ENCODE measurements at regions of chr6 and their contacts with region 1.

Region 1: GRCh38 chr6:153150752-153151440 is 19.8 kb upstream of the RGS17 start:
- DNase-seq: no peak
- ATAC-seq: no peak
- H3K4me3 Mint-ChIP-seq: no peak overlapping the region
- H3K27ac Mint-ChIP-seq: no peak overlapping the region
- H3K4me1 Mint-ChIP-seq: no peaks in the 10 kb centered on the region
- H3K27me3 Mint-ChIP-seq: peaks cover 3% of the 10 kb centered on the region

Region 2: DNA sequence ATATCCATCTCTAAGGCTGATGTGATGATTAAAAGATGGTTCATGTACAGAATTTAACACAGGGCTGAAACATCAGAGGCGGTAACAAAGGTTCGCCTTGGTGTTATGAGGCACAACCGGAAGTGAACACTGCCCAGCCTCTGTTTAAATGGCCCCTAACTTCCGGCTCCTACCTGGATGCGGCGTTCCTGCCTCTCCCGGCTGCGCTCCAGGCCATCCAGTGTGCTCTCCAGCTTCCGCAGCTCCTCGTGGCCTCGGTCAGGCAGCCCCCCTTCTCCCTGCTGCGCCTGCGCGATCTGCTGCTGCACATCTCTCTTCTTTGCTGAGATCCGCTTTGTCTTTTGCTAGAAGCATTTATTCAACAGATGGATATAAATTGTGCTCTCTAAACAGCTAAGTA is 709.0 kb before region 1 on chr6:
- CTCF ChIA-PET with region 1: no interaction called
- POLR2A ChIA-PET with region 1: no interaction called
- intact Hi-C with region 1: no loop called
- DNase-seq: no peak
- ATAC-seq: no peak
- H3K4me3 Mint-ChIP-seq: no peak overlapping the region
- H3K27ac Mint-ChIP-seq: no peak overlapping the region
- H3K4me1 Mint-ChIP-seq: no peaks in the 10 kb centered on the region
- H3K27me3 Mint-ChIP-seq: peaks cover 4% of the 10 kb centered on the region

Region 3: DNA sequence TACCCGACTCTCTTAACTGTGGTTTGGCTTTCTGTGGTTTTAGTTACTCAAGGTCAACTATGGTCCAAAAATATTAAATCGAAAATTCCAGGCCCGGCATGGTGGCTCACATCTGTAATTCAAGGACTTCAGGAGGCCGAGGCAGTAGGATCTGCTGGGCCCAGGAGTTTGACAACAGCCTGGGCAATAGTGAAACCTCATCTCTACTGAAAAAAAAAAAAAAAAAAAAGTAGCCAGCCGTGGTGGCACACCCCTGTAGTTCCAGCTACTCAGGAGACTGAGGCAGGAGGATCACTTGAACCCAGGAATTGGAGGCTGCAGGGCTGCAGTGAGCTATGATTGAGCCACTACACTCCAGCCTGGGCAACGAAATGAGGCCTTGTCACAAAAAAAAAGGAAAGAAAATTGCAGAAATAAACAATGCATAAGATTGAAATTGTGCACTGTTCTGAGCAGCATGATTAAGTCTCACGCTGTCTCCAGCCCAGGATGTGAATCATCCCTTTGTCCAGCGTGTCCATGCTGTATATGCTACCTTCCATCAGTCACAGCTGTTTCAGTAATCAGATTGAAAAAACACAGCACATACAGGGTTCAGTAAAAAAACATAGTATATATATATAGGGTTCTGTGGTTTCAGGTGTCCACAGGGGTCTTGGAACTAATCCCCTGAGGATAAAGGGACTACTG is 60.5 kb before region 1 on chr6:
- CTCF ChIA-PET with region 1: no interaction called
- POLR2A ChIA-PET with region 1: no interaction called
- intact Hi-C with region 1: no loop called
- DNase-seq: no peak
- ATAC-seq: no peak
- H3K4me3 Mint-ChIP-seq: no peak overlapping the region
- H3K27ac Mint-ChIP-seq: no peak overlapping the region
- H3K4me1 Mint-ChIP-seq: peaks cover 7% of the 10 kb centered on the region
- H3K27me3 Mint-ChIP-seq: peaks cover 9% of the 10 kb centered on the region

Region 4: DNA sequence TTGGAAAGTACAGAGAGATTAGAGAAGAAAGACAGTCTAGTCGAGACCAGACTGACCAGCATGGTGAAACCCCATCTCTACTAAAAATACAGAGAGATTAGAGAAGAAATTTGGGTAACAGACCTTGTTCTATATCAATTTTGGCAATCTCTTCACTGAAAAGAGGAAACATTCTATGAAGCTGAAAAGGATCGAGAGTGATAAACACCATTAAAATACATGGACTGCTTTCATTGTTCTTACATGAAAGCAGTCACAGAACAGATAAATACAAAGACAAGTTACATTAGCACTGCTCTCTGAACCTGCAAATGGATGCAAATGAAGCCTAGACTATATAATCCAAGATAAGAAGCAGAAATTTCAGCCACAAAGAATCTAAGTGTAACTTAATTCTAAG is 879.8 kb after region 1 on chr6:
- CTCF ChIA-PET with region 1: no interaction called
- POLR2A ChIA-PET with region 1: no interaction called
- intact Hi-C with region 1: loop called in 1 of 2 experiments (anchors 10 kb)
- DNase-seq: no peak
- ATAC-seq: no peak
- H3K4me3 Mint-ChIP-seq: no peak overlapping the region
- H3K27ac Mint-ChIP-seq: no peak overlapping the region
- H3K4me1 Mint-ChIP-seq: no peaks in the 10 kb centered on the region
- H3K27me3 Mint-ChIP-seq: peaks cover 9% of the 10 kb centered on the region